Activated CD4-positive, alpha-beta memory T cell treated with anti-CD3 and anti-CD28 coated beads, Interleukin-2, amount 10 ng/mL, durations not matched to agents 7 days and 5 days (primary cell): ENCODE measurements at regions of chr7 and their contacts with region 1.

Region 1: DNA sequence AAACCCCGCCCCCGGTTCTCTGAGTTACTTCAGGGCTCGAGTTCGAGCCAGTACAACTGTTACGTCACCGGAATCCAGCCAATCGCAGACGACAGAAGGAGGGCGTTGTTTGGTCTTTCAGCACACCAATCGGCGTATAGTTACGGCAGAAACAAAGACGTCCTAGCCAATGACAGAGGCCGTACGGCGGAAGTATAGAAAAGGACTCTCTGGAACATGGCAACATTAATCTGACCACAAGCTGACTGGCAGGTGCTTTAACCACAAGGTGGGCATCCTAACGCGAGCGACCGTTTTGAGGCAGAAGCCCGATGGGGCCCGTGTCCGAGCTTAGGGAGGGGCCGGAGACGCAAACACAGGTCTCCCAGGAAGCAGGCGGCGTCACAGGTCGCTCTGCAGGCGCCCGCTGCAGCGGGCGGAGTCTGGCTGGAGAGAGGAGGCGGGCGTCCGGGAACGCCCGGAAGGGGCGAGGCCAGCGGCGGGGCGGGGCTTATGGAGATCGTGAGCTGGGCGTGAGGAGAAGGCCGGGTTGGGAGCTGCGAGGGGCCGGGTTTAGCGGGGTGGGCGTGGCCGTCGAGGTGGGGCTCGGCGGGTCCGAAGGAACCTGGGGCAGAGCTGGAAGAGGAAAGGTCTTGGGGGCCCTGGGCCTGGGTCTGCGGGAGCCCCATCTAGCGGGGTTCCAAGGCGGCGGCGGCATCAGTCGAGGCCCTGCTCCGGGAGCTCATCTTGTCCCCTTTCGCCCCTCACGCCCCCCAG is at the start of gene MOSPD3:
- DNase-seq: peak; percentile 98
- H3K4me3 Mint-ChIP-seq: peak within 1 kb of the TSS; percentile 95
- H3K27ac Mint-ChIP-seq: peak within 1 kb of the TSS; percentile 99
- H3K4me1 Mint-ChIP-seq: peaks cover 26% of the 10 kb centered on the region
- H3K27me3 Mint-ChIP-seq: peaks cover 2% of the 10 kb centered on the region
- total RNA-seq, gene MOSPD3: 47.2 to 53.3 TPM

Region 2: DNA sequence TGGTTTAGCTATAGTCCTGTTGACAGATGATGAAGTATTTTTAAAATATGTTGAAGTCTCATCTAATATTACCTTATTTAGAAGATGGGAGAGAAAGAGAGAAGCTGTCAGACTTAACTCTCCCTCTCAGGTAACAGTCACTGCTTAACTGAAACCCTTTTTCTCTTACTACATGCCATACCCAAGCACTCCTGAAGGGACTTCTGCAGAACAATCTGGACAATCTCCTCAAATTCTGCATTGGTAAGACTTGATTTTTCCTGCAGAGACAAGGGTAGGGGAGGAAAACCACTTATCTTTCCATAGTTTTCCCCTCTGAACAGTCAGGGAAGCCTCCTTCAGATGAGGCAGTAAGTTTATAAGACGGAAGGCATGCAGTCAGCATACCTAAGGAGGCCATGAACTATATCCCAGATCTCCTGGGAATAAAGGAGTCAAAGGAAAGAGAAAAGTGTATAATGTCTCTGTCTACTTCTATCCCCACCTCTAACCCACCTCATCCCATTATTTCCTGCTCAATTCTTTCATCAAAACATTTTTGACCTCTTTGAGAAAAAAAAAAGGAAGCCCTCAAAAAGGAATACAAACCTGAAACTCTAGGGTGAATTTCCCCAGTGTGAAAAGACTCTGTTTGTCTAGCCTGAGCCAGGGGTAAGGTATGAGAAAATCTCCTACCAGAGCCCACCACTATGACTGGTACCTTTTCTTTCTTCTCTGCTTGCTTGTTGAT is 193.1 kb before region 1 on chr7:
- CTCF ChIA-PET with region 1: no interaction called
- POLR2A ChIA-PET with region 1: no interaction called
- DNase-seq: no peak
- H3K4me3 Mint-ChIP-seq: no peak overlapping the region
- H3K27ac Mint-ChIP-seq: no peak overlapping the region
- H3K4me1 Mint-ChIP-seq: peaks cover under 1% of the 10 kb centered on the region
- H3K27me3 Mint-ChIP-seq: no peaks in the 10 kb centered on the region

Region 3: DNA sequence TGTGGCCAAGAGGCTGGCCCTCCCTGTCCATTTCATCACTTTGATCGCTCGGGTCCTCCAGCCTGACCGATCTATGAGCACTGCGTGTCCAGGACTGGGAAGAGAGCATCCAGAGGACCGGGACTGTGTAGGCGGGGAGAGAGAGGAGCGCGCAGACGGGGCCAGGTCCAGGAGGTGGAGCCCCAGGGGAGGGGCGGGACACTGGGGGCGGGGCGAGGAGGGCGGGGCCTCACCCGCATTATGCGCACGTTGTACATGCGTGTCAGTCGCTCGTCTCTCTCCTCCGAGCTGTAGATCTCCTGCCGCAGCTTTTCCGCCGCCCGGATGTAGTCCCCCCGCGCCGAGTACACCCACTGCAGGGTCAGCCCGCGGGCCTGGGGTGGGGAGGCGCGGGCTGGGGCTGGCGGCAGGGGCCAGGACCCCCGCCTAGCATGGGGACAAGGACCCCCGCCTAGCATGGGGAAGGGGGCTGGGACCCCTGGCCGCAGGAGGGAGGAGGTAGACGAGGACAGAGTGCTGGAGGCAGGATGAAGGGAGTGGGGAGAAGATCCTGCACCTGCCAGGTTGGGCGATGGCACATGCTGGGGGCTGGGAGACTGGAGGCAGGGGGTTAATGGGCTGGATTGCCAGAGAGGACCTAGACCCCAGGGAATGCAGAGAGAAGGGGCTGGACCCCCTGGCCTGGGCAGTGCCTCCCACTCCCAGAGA is 14.5 kb after region 1 on chr7:
- CTCF ChIA-PET with region 1: interaction called, 163 read pairs
- POLR2A ChIA-PET with region 1: interaction called, 140 read pairs
- DNase-seq: peak; percentile 94
- H3K4me3 Mint-ChIP-seq: peak overlapping the region; percentile 76
- H3K27ac Mint-ChIP-seq: peak overlapping the region; percentile 86
- H3K4me1 Mint-ChIP-seq: peaks cover 74% of the 10 kb centered on the region
- H3K27me3 Mint-ChIP-seq: no peaks in the 10 kb centered on the region

Region 4: DNA sequence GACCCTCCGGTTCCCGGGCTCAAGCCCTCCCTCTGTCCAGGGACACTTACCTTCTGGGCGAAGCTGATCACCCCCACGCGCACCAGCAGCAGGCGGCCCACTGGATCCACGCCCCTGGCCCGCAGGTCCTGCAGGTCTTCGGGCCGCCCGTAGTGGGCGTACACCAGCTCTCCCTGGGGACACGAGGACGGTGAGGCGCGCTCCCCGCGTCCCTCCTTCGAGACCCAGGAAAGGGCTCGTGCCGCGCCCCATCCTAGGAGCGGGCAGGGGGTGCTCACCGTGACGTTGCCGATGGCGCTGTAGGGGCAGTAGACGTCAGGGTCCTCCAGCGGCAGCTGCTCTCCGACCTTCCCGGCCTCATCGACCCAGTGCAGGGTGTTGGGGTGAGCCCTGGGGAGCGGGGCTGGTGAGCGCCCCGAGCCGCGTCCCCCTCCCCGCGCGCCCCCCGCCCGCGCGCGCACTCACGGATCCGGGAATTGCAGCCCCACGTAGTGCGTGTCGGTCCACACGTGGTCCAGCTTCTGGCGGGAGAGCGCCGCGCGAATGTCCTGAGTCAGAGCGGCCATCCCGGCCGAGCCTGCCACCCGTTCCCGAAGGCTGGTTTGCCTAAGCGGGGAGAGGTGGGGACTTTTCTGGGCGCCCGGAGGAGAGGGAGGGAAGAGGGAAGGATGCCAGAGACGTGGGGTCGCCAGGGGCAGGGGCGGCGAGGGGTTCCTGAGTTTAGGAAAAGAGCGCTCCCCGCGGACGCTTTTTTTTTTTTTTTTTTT is 21.0 kb after region 1 on chr7:
- CTCF ChIA-PET with region 1: interaction called, 163 read pairs
- POLR2A ChIA-PET with region 1: interaction called, 140 read pairs
- DNase-seq: peak; percentile 70
- H3K4me3 Mint-ChIP-seq: peak overlapping the region; percentile 81
- H3K27ac Mint-ChIP-seq: peak overlapping the region; percentile 79
- H3K4me1 Mint-ChIP-seq: peaks cover 48% of the 10 kb centered on the region
- H3K27me3 Mint-ChIP-seq: peaks cover 6% of the 10 kb centered on the region

Region 5: DNA sequence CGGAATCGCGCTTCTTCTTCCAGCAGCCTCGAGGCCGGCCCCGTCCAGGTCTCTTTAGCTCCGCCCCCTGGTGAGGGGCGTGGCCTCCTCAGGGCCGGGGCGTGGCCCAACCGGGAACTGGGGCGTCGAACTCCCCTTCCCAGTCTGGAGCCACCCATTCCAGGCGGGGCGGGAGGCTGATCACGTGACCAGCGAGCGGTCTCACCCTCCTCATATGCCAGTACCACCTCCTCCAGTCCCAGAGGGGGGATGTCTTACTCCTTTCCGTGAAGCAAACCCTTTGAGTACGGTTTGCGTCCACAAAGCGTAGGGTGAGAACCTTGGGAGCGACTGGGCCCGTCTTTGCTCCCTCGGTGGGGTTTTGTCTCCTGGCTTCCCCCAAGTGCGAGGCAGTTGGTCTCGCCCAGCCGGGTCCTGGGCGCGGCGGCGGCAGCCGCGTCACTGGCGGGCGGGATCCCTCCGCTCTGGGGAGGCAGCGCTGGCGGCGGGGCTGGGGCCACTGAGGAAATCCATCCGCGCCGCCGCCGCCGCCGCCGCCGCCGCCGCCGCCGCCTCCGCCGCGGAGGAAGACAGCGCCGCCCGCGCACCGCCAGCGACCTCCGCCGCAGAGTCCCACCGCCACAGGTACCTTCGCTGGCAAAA is 61.3 kb after region 1 on chr7 and contains the start of gene GNB2:
- CTCF ChIA-PET with region 1: interaction called, 3 read pairs
- POLR2A ChIA-PET with region 1: interaction called, 38 read pairs
- DNase-seq: peak; percentile 99
- H3K4me3 Mint-ChIP-seq: peak within 1 kb of the TSS; percentile 98
- H3K27ac Mint-ChIP-seq: peak within 1 kb of the TSS; percentile 93
- H3K4me1 Mint-ChIP-seq: peaks cover 21% of the 10 kb centered on the region
- H3K27me3 Mint-ChIP-seq: peaks cover 10% of the 10 kb centered on the region
- total RNA-seq, gene GNB2: 263 to 266 TPM